ENCODE measurements at regions of chr16 and their contacts with region 1.

Region 1: GRCh38 chr16:57748596-57748995 is 13.0 kb downstream of the KATNB1 start:
- DNase-seq: no peak
- H3K4me3 ChIP-seq: no peak overlapping the region
- CTCF ChIP-seq: no peak

Region 2: GRCh38 chr16:57734925-57735754 is 13.5 kb before region 1 on chr16:
- CTCF ChIA-PET with region 1: interaction called, 11 read pairs
- POLR2A ChIA-PET with region 1: interaction called, 3 read pairs
- DNase-seq: peak; percentile 100
- H3K4me3 ChIP-seq: peak overlapping the region; percentile 96
- CTCF ChIP-seq: no peak